GM12878 (cell line): ENCODE measurements at regions of chr6 and their contacts with region 1.

Region 1: GRCh38 chr6:87832025-87832825 is 130.2 kb upstream of the AKIRIN2 start:
- DNase-seq: peak; percentile 51
- ATAC-seq: peak; percentile 88
- H3K4me3 ChIP-seq: peak overlapping the region; percentile 15; the same call in 1 of the 2 replicates
- H3K27ac ChIP-seq: peak overlapping the region; percentile 77
- H3K4me1 ChIP-seq: peaks cover 10% of the 10 kb centered on the region
- H3K27me3 ChIP-seq: no peaks in the 10 kb centered on the region
- CTCF ChIP-seq: peak; percentile 43 to 69 (median 54); a peak in 5 of 6 replicates
- EP300 ChIP-seq: peak in 1 of 2 experiments; percentile 32; a peak in 1 of 4 replicates
- POLR2A ChIP-seq: no peak
- RAD21 ChIP-seq: peak; percentile 80

Region 2: DNA sequence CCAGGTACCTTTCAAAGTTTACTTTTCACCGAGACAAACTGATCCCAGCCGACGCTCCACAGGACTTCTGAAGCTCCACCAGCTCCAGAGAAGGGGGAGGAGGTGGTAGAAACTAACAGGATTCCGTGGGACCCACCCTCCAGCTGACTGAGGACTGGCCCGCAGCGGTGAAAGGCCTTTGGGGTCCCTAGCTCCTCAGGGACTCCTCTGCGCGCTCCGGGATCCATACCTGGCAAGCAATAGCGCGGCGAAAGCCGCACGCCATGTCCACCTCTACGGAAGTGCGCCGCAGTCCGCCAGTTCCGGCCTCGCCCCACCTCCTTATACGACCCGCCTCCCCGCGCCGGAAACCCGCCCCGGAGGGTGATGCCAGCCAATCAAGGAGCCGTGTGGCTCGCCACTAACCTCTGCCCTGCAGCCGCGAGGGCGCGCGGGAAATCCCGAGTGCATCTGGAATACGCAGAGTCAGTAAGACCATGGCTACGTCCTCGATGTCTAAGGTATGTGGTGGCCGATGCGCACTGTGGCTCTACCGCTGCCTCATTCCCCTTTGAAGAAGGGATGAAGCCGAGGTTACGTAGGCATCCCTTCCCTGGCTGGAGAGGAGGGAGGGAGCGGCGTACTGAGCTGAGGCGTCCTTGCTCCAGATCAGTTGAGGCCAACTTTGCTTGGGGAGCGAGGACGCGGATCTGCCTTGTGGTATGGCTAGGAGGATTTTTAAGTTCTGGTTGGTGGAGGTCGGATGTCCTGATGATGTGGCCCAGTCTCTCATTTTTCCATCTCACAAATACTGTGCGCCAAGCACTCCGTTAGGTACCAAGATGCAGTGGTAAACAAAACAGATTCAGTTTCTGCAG is 242.3 kb before region 1 on chr6 and contains the starts of genes ORC3 and RARS2:
- CTCF ChIA-PET with region 1: no interaction called
- POLR2A ChIA-PET with region 1: no interaction called
- RAD21 ChIA-PET with region 1: interaction called, 10 read pairs
- SMC1A ChIA-PET with region 1: no interaction called
- in situ Hi-C with region 1: no loop called
- intact Hi-C with region 1: no loop called
- DNase-seq: peak; percentile 81
- ATAC-seq: peak; percentile 99
- H3K4me3 ChIP-seq: peak within 1 kb of the TSS; percentile 99
- H3K27ac ChIP-seq: peak within 1 kb of the TSS; percentile 87
- H3K4me1 ChIP-seq: peaks cover 3% of the 10 kb centered on the region; the same call in 1 of the 2 replicates
- H3K27me3 ChIP-seq: no peaks in the 10 kb centered on the region
- CTCF ChIP-seq: no peak
- EP300 ChIP-seq: no peak
- POLR2A ChIP-seq: peak; percentile 93
- RAD21 ChIP-seq: no peak
- polyA plus RNA-seq, gene ORC3: 65.4 to 76.3 TPM
- polyA plus RNA-seq, gene RARS2: 37.9 to 43.0 TPM

Region 3: DNA sequence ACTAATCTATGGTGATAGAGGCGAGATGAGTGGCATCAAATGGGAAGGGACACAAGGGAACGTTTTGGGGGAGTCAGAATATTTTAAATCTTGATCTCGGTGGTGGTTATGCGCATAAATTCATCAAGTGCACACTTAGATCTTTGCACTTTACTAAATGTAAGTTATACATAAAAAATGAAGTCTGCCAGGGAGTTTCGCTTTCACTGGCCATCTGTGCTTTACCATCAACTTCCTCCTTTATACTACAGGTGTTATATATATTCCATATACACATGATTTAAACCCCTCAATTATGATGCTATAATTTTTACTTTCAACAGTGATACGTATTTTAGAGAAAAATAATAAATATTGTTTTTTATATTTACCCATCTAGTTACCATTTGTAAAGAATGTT is 32.6 kb before region 1 on chr6:
- CTCF ChIA-PET with region 1: interaction called, 9 read pairs
- POLR2A ChIA-PET with region 1: no interaction called
- RAD21 ChIA-PET with region 1: interaction called, 24 read pairs
- SMC1A ChIA-PET with region 1: interaction called, 16 read pairs
- in situ Hi-C with region 1: no loop called
- intact Hi-C with region 1: no loop called
- DNase-seq: no peak
- ATAC-seq: peak; percentile 29
- H3K4me3 ChIP-seq: no peak overlapping the region
- H3K27ac ChIP-seq: peak overlapping the region; percentile 36; the same call in 1 of the 2 replicates
- H3K4me1 ChIP-seq: peaks cover 34% of the 10 kb centered on the region
- H3K27me3 ChIP-seq: no peaks in the 10 kb centered on the region
- CTCF ChIP-seq: no peak
- EP300 ChIP-seq: no peak
- POLR2A ChIP-seq: no peak
- RAD21 ChIP-seq: no peak

Region 4: DNA sequence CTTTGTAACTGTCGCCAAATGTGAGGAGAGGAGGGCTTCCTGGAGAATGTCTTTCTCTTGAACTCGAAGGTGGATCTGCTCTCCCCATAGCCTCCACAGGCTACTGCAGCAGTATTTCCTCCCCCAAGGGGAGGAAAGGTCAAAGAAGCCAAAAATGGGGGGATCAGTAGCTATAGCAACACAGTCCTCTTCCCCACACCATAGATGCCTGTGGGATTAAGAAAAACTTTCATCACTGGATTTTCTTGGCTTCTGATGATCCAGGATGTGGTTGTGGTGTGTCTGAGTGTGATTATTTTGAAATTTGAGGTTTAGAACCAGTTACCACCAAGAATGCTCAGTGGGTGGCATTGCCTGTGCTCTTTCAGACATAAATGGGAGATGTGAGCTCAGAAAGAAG is 75.3 kb after region 1 on chr6:
- CTCF ChIA-PET with region 1: interaction called, 21 read pairs
- POLR2A ChIA-PET with region 1: interaction called, 4 read pairs
- RAD21 ChIA-PET with region 1: interaction called, 30 read pairs
- SMC1A ChIA-PET with region 1: interaction called, 21 read pairs
- in situ Hi-C with region 1: no loop called
- intact Hi-C with region 1: loop called (anchors 1 kb)
- DNase-seq: peak; percentile 63
- ATAC-seq: peak; percentile 77
- H3K4me3 ChIP-seq: no peak overlapping the region
- H3K27ac ChIP-seq: peak overlapping the region; percentile 50; the same call in 1 of the 2 replicates
- H3K4me1 ChIP-seq: peaks cover 55% of the 10 kb centered on the region
- H3K27me3 ChIP-seq: no peaks in the 10 kb centered on the region
- CTCF ChIP-seq: no peak
- EP300 ChIP-seq: peak in 1 of 2 experiments; percentile 66; a peak in 2 of 4 replicates
- POLR2A ChIP-seq: no peak
- RAD21 ChIP-seq: 0 out of 2 replicates have a peak, but pooled peaks have one; percentile 6

Region 5: DNA sequence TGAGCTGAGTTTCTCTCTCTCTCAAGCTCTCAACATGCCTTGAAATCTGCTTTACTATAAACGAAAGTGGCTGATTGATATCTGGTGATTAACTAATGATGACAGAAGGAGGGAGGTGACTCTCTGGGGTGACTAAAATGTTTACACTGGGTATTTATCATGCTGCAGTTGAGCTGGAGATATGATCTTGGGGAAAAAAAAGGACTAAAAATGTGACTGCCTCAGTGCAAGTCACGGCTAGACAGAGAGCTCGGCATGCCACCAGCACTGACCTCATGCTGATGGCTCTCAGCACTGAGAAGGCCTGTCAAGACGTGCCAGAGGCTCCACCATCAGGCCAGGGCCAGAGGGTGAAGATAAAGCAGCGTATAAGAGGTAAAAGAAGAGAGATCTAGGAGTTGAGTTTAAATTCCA is 112.3 kb after region 1 on chr6:
- CTCF ChIA-PET with region 1: interaction called, 18 read pairs
- POLR2A ChIA-PET with region 1: no interaction called
- RAD21 ChIA-PET with region 1: interaction called, 12 read pairs
- SMC1A ChIA-PET with region 1: interaction called, 14 read pairs
- in situ Hi-C with region 1: no loop called
- intact Hi-C with region 1: no loop called
- DNase-seq: no peak
- ATAC-seq: peak; percentile 81
- H3K4me3 ChIP-seq: no peak overlapping the region
- H3K27ac ChIP-seq: no peak overlapping the region
- H3K4me1 ChIP-seq: no peaks in the 10 kb centered on the region
- H3K27me3 ChIP-seq: no peaks in the 10 kb centered on the region
- CTCF ChIP-seq: peak in 1 of 3 experiments; percentile 28; a peak in 2 of 6 replicates
- EP300 ChIP-seq: no peak
- POLR2A ChIP-seq: no peak
- RAD21 ChIP-seq: peak; percentile 37; the same call in 1 of the 2 replicates

Region 6: DNA sequence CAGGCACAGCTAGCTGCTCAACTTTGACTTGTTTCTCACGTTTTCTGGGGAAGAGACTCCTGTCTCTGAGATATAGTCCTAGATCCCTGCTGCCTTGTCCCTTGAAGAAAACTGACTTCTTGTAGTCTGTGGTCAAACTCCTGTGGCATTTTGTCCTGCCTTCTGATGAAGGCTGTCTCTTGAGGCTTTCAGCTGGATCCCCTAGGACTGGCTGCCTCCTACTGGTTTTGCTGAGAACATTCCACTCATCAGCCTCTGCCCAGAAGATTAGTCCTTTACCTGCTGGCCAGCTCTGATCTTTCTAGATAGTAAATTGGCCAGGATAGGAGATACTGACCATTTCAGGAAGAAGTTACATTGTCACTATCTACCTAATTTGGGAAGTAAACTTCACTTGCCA is 405.8 kb after region 1 on chr6:
- CTCF ChIA-PET with region 1: interaction called, 20 read pairs
- POLR2A ChIA-PET with region 1: no interaction called
- RAD21 ChIA-PET with region 1: interaction called, 24 read pairs
- SMC1A ChIA-PET with region 1: interaction called, 35 read pairs
- in situ Hi-C with region 1: loop called (anchors 10 kb)
- intact Hi-C with region 1: loop called (anchors 1 kb)
- DNase-seq: peak; percentile 33
- ATAC-seq: peak; percentile 92
- H3K4me3 ChIP-seq: no peak overlapping the region
- H3K27ac ChIP-seq: no peak overlapping the region
- H3K4me1 ChIP-seq: peaks cover 3% of the 10 kb centered on the region; the same call in 1 of the 2 replicates
- H3K27me3 ChIP-seq: no peaks in the 10 kb centered on the region
- CTCF ChIP-seq: peak; percentile 64 to 77 (median 66); a peak in 5 of 6 replicates
- EP300 ChIP-seq: no peak
- POLR2A ChIP-seq: no peak
- RAD21 ChIP-seq: peak; percentile 97

Region 7: GRCh38 chr6:88780714-88781389 is 948.6 kb after region 1 on chr6:
- CTCF ChIA-PET with region 1: interaction called, 5 read pairs
- POLR2A ChIA-PET with region 1: no interaction called
- RAD21 ChIA-PET with region 1: interaction called, 12 read pairs
- SMC1A ChIA-PET with region 1: interaction called, 6 read pairs
- in situ Hi-C with region 1: no loop called
- intact Hi-C with region 1: loop called (anchors 10 kb)
- DNase-seq: peak; percentile 63
- ATAC-seq: peak; percentile 90
- H3K4me3 ChIP-seq: no peak overlapping the region
- H3K27ac ChIP-seq: no peak overlapping the region
- H3K4me1 ChIP-seq: no peaks in the 10 kb centered on the region
- H3K27me3 ChIP-seq: no peaks in the 10 kb centered on the region
- CTCF ChIP-seq: peak; percentile 60 to 68 (median 67); a peak in 5 of 6 replicates
- EP300 ChIP-seq: no peak
- POLR2A ChIP-seq: no peak
- RAD21 ChIP-seq: peak; percentile 88